Ascending aorta (tissue), 2 donors: ENCODE measurements at regions of chr12 and their contacts with region 1.

Region 1: DNA sequence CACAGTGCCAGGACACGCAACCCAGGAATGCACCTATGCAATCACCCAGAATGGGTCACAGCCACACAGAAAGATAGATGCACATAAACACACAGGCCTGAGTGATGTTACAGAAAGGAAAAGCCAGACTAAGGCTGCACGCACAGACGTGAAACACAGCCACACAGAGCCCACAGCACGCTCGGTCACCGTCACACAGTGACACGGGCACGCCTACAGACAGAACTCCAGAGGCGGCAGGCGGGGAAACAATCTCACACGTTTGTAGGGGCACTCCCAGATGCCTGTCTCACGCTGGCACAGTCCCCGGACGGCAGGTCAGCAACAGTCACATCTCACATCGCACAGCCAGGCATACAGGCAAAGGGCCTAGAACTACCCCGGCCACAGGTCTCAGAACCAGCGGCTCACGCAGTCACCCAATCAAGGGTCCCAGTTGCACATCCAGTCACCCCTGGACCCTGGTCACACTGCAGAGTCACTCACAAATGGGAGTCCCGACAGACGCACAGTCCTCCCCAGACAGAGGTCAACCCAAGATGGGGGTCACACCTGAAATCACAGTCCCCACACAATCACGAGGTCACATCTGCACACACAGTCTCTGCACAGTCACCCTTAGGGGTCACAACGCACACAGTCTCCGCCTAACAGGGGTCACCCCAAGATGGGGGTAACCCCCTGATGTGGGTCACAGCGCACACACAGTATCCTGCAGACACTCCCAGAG is 790 bp downstream of the SSH1 start:
- DNase-seq: peak; percentile 59 to 88
- H3K4me3 ChIP-seq: peak overlapping the region; percentile 87 to 93
- H3K27ac ChIP-seq: peak overlapping the region; percentile 93 to 97
- H3K4me1 ChIP-seq: peaks cover 23 to 46% of the 10 kb centered on the region in 2 donors
- H3K27me3 ChIP-seq: no peaks in the 10 kb centered on the region
- CTCF ChIP-seq: no peak

Region 2: DNA sequence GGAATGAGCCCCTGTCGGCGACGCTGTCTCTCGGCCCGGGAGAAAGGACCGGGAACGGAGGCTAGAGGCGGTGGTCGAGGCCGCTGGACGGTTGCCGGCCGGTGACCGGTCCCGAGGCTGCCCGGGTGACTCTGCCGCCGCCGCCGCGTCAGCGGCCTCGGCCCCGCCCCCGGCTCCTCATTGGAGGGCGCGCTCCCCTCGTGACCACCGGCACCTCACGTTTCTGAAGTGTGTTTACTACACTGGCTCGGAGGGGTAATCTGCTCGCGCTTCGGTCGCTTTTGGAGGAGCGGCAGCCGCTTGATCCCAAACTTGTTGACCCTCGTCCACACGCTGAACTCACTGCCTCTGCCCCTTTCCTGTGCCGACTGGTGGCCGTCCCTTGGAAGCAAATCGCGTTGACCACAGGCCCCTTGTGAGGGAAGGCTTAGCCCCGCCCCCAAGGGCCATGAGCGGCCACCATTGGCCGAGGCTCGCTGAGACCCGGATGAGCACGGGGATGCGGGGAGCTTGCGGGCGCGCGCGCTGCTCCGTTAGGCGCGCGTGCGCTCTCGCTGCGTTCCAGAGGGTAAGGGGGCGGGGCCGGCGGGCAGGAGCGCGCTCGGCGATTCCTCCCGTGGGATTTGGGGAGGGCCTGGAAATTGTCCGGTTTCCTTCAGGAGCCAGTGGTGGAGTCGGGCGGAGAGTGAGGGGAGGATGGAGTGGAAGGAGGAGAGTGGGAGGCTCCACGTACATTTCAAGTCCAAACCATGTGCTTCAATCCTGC is 1763.0 kb before region 1 on chr12 and contains the start of gene CRY1:
- intact Hi-C with region 1: loop called (anchors 5 kb)
- DNase-seq: peak; percentile 83 to 97
- H3K4me3 ChIP-seq: peak within 1 kb of the TSS; percentile 87 to 95
- H3K27ac ChIP-seq: peak within 1 kb of the TSS; percentile 99
- H3K4me1 ChIP-seq: peaks cover 0 to 9% of the 10 kb centered on the region in 2 donors
- H3K27me3 ChIP-seq: no peaks in the 10 kb centered on the region
- CTCF ChIP-seq: no peak
- total RNA-seq, gene CRY1: 23.0 TPM

Region 3: GRCh38 chr12:108514973-108515814 is 341.4 kb before region 1 on chr12 and contains the start of gene FICD:
- intact Hi-C with region 1: loop called (anchors 5 kb)
- DNase-seq: peak; percentile 99 to 100
- H3K4me3 ChIP-seq: peak within 1 kb of the TSS; percentile 80 to 97
- H3K27ac ChIP-seq: peak within 1 kb of the TSS; percentile 71 to 76
- H3K4me1 ChIP-seq: peaks cover 6 to 10% of the 10 kb centered on the region in 2 donors
- H3K27me3 ChIP-seq: no peaks in the 10 kb centered on the region
- CTCF ChIP-seq: no peak
- total RNA-seq, gene FICD: 30.8 TPM

Region 4: GRCh38 chr12:108691175-108691997 is 165.2 kb before region 1 on chr12:
- intact Hi-C with region 1: loop called (anchors 1 kb)
- DNase-seq: peak; percentile 93 to 98
- H3K4me3 ChIP-seq: peak overlapping the region; percentile 38 to 50
- H3K27ac ChIP-seq: peak overlapping the region; percentile 95 to 97
- H3K4me1 ChIP-seq: peaks cover 23 to 66% of the 10 kb centered on the region in 2 donors
- H3K27me3 ChIP-seq: no peaks in the 10 kb centered on the region
- CTCF ChIP-seq: peak; percentile 26 to 56 (median 42)

Region 5: GRCh38 chr12:108833355-108833733 is 23.2 kb before region 1 on chr12:
- intact Hi-C with region 1: loop called (anchors 1 kb)
- DNase-seq: peak in 1 of 2 donors; percentile 93
- H3K4me3 ChIP-seq: peak overlapping the region; percentile 7 to 40
- H3K27ac ChIP-seq: peak overlapping the region; percentile 92
- H3K4me1 ChIP-seq: peaks cover 33 to 67% of the 10 kb centered on the region in 2 donors
- H3K27me3 ChIP-seq: no peaks in the 10 kb centered on the region
- CTCF ChIP-seq: no peak

Region 6: DNA sequence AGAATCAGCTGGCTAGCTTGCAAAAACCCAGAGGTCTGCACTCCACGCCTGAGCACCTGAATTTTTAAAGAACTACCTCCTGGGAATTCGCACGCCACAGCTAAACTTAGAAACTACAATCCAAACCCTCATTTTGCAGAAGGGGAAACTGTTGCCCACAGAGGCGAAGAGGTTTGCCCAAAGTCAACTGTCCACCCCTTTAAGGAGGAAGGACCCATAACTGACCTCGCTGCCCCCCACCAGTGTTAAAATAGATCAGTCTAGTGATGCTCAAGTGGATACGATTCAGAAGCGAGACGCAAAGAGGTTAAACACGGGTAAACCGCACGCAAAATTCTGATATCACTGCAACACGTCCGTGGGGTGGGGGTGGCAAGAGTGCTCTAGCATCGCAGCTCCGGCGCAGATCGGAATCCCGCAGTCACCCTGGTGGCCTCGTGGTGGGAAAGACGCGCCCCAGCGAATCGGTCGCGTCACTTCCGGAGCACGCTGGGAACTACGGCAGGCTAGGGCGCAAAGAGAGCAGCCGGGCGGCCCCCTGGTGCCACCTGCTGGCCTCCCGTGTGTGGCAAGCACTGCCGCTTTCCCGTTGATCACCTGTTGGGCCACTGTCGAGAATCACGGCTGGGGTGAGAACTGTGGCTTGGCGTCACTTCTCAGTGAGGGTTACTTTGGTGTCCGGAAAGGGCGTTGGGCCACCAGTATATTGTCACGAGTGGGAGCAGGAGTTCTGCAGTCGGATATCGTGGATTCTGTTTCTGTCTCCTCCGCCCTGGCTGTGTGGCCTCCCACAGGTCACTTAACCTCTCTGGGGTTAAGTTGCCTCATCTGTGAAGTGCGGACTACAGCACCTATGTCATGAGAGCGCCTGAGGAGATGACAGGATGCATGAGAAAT is 236.7 kb after region 1 on chr12 and contains the start of gene ALKBH2:
- intact Hi-C with region 1: loop called (anchors 5 kb)
- DNase-seq: peak; percentile 66 to 97
- H3K4me3 ChIP-seq: peak within 1 kb of the TSS; percentile 52 to 66
- H3K27ac ChIP-seq: peak within 1 kb of the TSS; percentile 54 to 58
- H3K4me1 ChIP-seq: peaks cover 8 to 26% of the 10 kb centered on the region in 2 donors
- H3K27me3 ChIP-seq: no peaks in the 10 kb centered on the region
- CTCF ChIP-seq: peak; percentile 93 to 99 (median 97)
- total RNA-seq, gene ALKBH2: 18.6 TPM